GM12878 (cell line): ENCODE measurements at regions of chr1 and their contacts with region 1.

Region 1: GRCh38 chr1:21270086-21270689 is 20.1 kb downstream of the ECE1 start:
- DNase-seq: peak; percentile 13
- ATAC-seq: peak; percentile 97
- H3K4me3 ChIP-seq: no peak overlapping the region
- H3K27ac ChIP-seq: no peak overlapping the region
- H3K4me1 ChIP-seq: no peaks in the 10 kb centered on the region
- H3K27me3 ChIP-seq: no peaks in the 10 kb centered on the region
- CTCF ChIP-seq: peak; percentile 93 to 99 (median 95)
- EP300 ChIP-seq: no peak
- POLR2A ChIP-seq: no peak
- RAD21 ChIP-seq: peak; percentile 58

Region 2: DNA sequence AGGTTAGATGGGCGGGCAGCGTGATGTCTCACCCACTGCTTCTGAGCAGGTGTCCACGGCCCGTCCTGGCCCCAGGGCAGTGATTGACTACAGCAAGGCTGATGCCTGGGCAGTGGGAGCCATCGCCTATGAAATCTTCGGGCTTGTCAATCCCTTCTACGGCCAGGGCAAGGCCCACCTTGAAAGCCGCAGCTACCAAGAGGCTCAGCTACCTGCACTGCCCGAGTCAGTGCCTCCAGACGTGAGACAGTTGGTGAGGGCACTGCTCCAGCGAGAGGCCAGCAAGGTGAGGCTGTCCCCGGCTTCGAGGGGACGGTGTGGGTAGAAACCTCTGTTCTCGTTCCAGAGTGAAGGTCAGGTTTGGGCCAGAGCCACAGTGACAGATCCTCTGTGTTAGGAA is 621.2 kb before region 1 on chr1:
- CTCF ChIA-PET with region 1: no interaction called
- POLR2A ChIA-PET with region 1: no interaction called
- RAD21 ChIA-PET with region 1: no interaction called
- SMC1A ChIA-PET with region 1: no interaction called
- in situ Hi-C with region 1: no loop called
- intact Hi-C with region 1: no loop called
- DNase-seq: no peak
- ATAC-seq: no peak
- H3K4me3 ChIP-seq: no peak overlapping the region
- H3K27ac ChIP-seq: no peak overlapping the region
- H3K4me1 ChIP-seq: no peaks in the 10 kb centered on the region
- H3K27me3 ChIP-seq: no peaks in the 10 kb centered on the region
- CTCF ChIP-seq: no peak
- EP300 ChIP-seq: no peak
- POLR2A ChIP-seq: 0 out of 2 replicates have a peak, but pooled peaks have one; percentile 5
- RAD21 ChIP-seq: no peak

Region 3: GRCh38 chr1:21005466-21006239 is 264.5 kb before region 1 on chr1:
- CTCF ChIA-PET with region 1: no interaction called
- POLR2A ChIA-PET with region 1: no interaction called
- RAD21 ChIA-PET with region 1: no interaction called
- SMC1A ChIA-PET with region 1: no interaction called
- in situ Hi-C with region 1: no loop called
- intact Hi-C with region 1: no loop called
- DNase-seq: no peak
- ATAC-seq: no peak
- H3K4me3 ChIP-seq: no peak overlapping the region
- H3K27ac ChIP-seq: no peak overlapping the region
- H3K4me1 ChIP-seq: no peaks in the 10 kb centered on the region
- H3K27me3 ChIP-seq: no peaks in the 10 kb centered on the region
- CTCF ChIP-seq: no peak
- EP300 ChIP-seq: no peak
- POLR2A ChIP-seq: no peak
- RAD21 ChIP-seq: no peak

Region 4: DNA sequence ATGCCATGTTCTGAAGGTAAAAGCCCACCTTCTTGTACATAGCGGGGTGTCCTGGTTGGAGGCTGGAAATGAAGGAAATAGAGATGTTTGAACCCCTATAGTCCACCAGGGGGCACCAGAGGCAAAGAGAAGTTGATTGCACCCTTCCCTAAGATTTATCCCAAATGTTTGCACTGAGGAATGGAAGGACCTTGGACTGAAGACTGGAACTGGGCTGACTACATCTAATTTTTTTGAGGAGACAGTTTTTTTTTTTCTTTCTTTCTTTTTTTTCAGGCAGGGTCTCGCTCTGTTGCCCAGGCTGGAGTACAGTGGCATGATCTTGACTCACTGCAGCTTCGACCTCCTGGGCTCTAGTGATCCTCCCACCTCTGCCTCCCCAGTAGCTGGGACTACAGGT is 38.1 kb before region 1 on chr1:
- CTCF ChIA-PET with region 1: interaction called, 32 read pairs
- POLR2A ChIA-PET with region 1: no interaction called
- RAD21 ChIA-PET with region 1: no interaction called
- SMC1A ChIA-PET with region 1: interaction called, 3 read pairs
- in situ Hi-C with region 1: no loop called
- intact Hi-C with region 1: no loop called
- DNase-seq: no peak
- ATAC-seq: peak; percentile 77
- H3K4me3 ChIP-seq: no peak overlapping the region
- H3K27ac ChIP-seq: no peak overlapping the region
- H3K4me1 ChIP-seq: no peaks in the 10 kb centered on the region
- H3K27me3 ChIP-seq: no peaks in the 10 kb centered on the region
- CTCF ChIP-seq: peak; percentile 59 to 75 (median 73)
- EP300 ChIP-seq: no peak
- POLR2A ChIP-seq: no peak
- RAD21 ChIP-seq: peak; percentile 82

Region 5: GRCh38 chr1:21255278-21255942 is 14.8 kb before region 1 on chr1:
- CTCF ChIA-PET with region 1: interaction called, 58 read pairs
- POLR2A ChIA-PET with region 1: no interaction called
- RAD21 ChIA-PET with region 1: interaction called, 8 read pairs
- SMC1A ChIA-PET with region 1: interaction called, 4 read pairs
- in situ Hi-C with region 1: no loop called
- intact Hi-C with region 1: no loop called
- DNase-seq: peak; percentile 23
- ATAC-seq: peak; percentile 98
- H3K4me3 ChIP-seq: no peak overlapping the region
- H3K27ac ChIP-seq: no peak overlapping the region
- H3K4me1 ChIP-seq: no peaks in the 10 kb centered on the region
- H3K27me3 ChIP-seq: no peaks in the 10 kb centered on the region
- CTCF ChIP-seq: peak; percentile 82 to 86 (median 84)
- EP300 ChIP-seq: no peak
- POLR2A ChIP-seq: no peak
- RAD21 ChIP-seq: peak; percentile 98

Region 6: GRCh38 chr1:21324368-21325141 is 54.4 kb after region 1 on chr1:
- CTCF ChIA-PET with region 1: interaction called, 24 read pairs
- POLR2A ChIA-PET with region 1: interaction called, 4 read pairs
- RAD21 ChIA-PET with region 1: interaction called, 6 read pairs
- SMC1A ChIA-PET with region 1: interaction called, 12 read pairs
- in situ Hi-C with region 1: no loop called
- intact Hi-C with region 1: no loop called
- DNase-seq: peak; percentile 41
- ATAC-seq: peak; percentile 83
- H3K4me3 ChIP-seq: 0 out of 2 replicates have a peak overlapping the region, but pooled peaks have one; percentile 4
- H3K27ac ChIP-seq: peak overlapping the region; percentile 40
- H3K4me1 ChIP-seq: peaks cover 36% of the 10 kb centered on the region
- H3K27me3 ChIP-seq: no peaks in the 10 kb centered on the region
- CTCF ChIP-seq: no peak
- EP300 ChIP-seq: no peak
- POLR2A ChIP-seq: no peak
- RAD21 ChIP-seq: no peak

Region 7: GRCh38 chr1:21334214-21335087 is 64.3 kb after region 1 on chr1:
- CTCF ChIA-PET with region 1: interaction called, 104 read pairs
- POLR2A ChIA-PET with region 1: no interaction called
- RAD21 ChIA-PET with region 1: interaction called, 8 read pairs
- SMC1A ChIA-PET with region 1: interaction called, 11 read pairs
- in situ Hi-C with region 1: no loop called
- intact Hi-C with region 1: no loop called
- DNase-seq: peak; percentile 91
- ATAC-seq: peak; percentile 92
- H3K4me3 ChIP-seq: peak overlapping the region; percentile 55; the same call in 1 of the 2 replicates
- H3K27ac ChIP-seq: peak overlapping the region; percentile 87
- H3K4me1 ChIP-seq: peaks cover 46% of the 10 kb centered on the region
- H3K27me3 ChIP-seq: no peaks in the 10 kb centered on the region
- CTCF ChIP-seq: peak; percentile 72 to 87 (median 76)
- EP300 ChIP-seq: peak in 1 of 2 experiments; percentile 11; a peak in 1 of 4 replicates
- POLR2A ChIP-seq: peak; percentile 56
- RAD21 ChIP-seq: peak; percentile 63

Region 8: GRCh38 chr1:21344750-21345443 is 74.7 kb after region 1 on chr1:
- CTCF ChIA-PET with region 1: interaction called, 25 read pairs
- POLR2A ChIA-PET with region 1: no interaction called
- RAD21 ChIA-PET with region 1: interaction called, 8 read pairs
- SMC1A ChIA-PET with region 1: interaction called, 6 read pairs
- in situ Hi-C with region 1: no loop called
- intact Hi-C with region 1: no loop called
- DNase-seq: no peak
- ATAC-seq: peak; percentile 19
- H3K4me3 ChIP-seq: peak overlapping the region; percentile 98
- H3K27ac ChIP-seq: peak overlapping the region; percentile 43; the same call in 1 of the 2 replicates
- H3K4me1 ChIP-seq: peaks cover 34% of the 10 kb centered on the region
- H3K27me3 ChIP-seq: peaks cover 0 to 2% of the 10 kb centered on the region in 2 experiments; a peak in 1 of 4 replicates
- CTCF ChIP-seq: no peak
- EP300 ChIP-seq: no peak
- POLR2A ChIP-seq: no peak
- RAD21 ChIP-seq: no peak

Region 9: DNA sequence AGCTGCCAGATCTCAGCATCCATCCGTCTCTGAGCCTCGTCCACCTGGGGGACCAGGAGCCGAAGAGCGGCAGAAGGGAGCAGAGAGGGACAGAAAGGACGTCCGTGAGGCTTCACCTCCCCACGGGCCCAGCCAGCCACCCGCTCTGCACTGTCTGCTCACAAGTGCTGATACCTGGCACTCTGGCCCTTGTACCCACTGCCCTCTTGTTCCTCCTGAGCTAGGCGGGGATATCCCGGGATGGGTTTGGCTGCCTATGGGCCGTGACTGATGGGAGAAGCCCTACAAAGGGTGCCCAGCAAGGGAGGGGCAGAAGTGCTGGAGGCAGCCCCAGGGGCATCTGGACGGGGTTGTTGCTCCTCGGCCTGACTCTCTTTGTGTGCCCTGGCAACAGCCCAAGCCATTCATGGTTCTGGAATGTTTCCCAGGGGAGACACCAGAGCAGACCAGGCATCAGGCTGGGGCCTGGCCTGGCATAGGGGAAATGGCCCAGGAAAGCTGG is 599.5 kb after region 1 on chr1:
- CTCF ChIA-PET with region 1: no interaction called
- POLR2A ChIA-PET with region 1: no interaction called
- RAD21 ChIA-PET with region 1: no interaction called
- SMC1A ChIA-PET with region 1: no interaction called
- in situ Hi-C with region 1: no loop called
- intact Hi-C with region 1: no loop called
- DNase-seq: no peak
- ATAC-seq: no peak
- H3K4me3 ChIP-seq: no peak overlapping the region
- H3K27ac ChIP-seq: no peak overlapping the region
- H3K4me1 ChIP-seq: peaks cover 28% of the 10 kb centered on the region
- H3K27me3 ChIP-seq: no peaks in the 10 kb centered on the region; a peak in 1 of 4 replicates
- CTCF ChIP-seq: no peak
- EP300 ChIP-seq: no peak
- POLR2A ChIP-seq: no peak
- RAD21 ChIP-seq: no peak